Stomach (tissue), 19 donors: ENCODE measurements at regions of chr16 and their contacts with region 1.

Region 1: DNA sequence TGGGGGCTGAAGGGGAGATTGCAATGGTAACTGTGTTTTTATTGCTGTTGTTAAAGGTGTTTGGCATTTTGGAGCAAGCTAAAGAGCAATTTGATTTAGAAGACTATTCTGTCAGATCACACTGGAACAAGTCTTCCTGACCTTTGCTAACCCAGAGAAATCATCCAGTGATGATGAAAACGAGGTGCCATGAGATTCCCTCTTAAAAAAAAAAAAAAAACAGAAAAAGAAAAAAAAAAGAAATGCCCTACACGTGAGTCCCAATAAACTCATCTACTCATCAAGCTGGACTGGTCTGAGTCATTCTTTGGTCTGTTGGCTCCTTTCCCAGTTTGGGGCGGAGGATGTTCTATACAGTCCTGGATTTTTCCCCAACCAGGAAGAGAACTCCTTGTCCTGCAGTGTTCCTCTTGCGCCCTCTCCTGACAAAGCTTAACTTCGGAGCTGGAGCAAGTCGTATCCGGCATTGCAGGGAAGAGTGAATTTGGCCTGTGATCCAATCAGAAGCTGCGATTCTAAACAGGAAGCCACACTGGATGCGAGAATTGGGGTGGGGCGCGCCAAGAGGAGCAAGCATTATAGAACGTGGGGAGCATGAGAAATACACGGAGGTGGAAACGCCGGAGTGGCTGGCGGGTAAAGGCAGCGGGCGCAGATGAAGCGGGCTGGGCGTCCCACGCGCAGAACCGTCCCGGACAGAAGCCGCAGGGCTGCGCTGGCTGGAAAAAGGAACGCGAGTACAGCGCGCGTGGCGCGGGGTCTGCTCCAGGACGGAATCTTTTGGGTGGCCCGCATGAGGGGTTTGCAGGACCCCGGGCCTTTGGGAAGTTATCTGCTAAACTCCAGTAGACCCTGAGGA is 22.4 kb upstream of the CRYM start:
- DNase-seq: peak; percentile 96 to 99
- H3K4me3 ChIP-seq: peak overlapping the region; percentile 64 to 81 (median 70)
- H3K27ac ChIP-seq: peak overlapping the region; percentile 75 to 90 (median 87)
- H3K4me1 ChIP-seq: peaks cover 10 to 28% (median 26%) of the 10 kb centered on the region in 4 donors
- H3K27me3 ChIP-seq: no peaks in the 10 kb centered on the region
- CTCF ChIP-seq: peak in 5 of 7 experiments; percentile 64 to 95 (median 66)
- EP300 ChIP-seq: no peak
- POLR2A ChIP-seq: no peak

Region 2: GRCh38 chr16:21184834-21185233 is 115.7 kb before region 1 on chr16:
- intact Hi-C with region 1: loop called (anchors 5 kb)
- DNase-seq: no peak
- H3K4me3 ChIP-seq: no peak overlapping the region
- H3K27ac ChIP-seq: no peak overlapping the region
- H3K4me1 ChIP-seq: peaks cover 0 to 10% (median 7%) of the 10 kb centered on the region in 4 donors
- H3K27me3 ChIP-seq: no peaks in the 10 kb centered on the region
- CTCF ChIP-seq: no peak
- EP300 ChIP-seq: no peak
- POLR2A ChIP-seq: no peak